ENCODE measurements at regions of chr2 and their contacts with region 1.

Region 1: GRCh38 chr2:160994141-160995002 is 165.9 kb upstream of the TANK start:
- DNase-seq: no peak
- H3K4me3 ChIP-seq: no peak overlapping the region
- CTCF ChIP-seq: peak; percentile 58

Region 2: GRCh38 chr2:160102021-160102760 is 892.2 kb before region 1 on chr2:
- CTCF ChIA-PET with region 1: interaction called, 68 read pairs
- POLR2A ChIA-PET with region 1: no interaction called
- DNase-seq: no peak
- H3K4me3 ChIP-seq: no peak overlapping the region
- CTCF ChIP-seq: no peak

Region 3: GRCh38 chr2:160210599-160211138 is 783.7 kb before region 1 on chr2:
- CTCF ChIA-PET with region 1: interaction called, 10 read pairs
- POLR2A ChIA-PET with region 1: no interaction called
- DNase-seq: no peak
- H3K4me3 ChIP-seq: no peak overlapping the region
- CTCF ChIP-seq: peak; percentile 79

Region 4: DNA sequence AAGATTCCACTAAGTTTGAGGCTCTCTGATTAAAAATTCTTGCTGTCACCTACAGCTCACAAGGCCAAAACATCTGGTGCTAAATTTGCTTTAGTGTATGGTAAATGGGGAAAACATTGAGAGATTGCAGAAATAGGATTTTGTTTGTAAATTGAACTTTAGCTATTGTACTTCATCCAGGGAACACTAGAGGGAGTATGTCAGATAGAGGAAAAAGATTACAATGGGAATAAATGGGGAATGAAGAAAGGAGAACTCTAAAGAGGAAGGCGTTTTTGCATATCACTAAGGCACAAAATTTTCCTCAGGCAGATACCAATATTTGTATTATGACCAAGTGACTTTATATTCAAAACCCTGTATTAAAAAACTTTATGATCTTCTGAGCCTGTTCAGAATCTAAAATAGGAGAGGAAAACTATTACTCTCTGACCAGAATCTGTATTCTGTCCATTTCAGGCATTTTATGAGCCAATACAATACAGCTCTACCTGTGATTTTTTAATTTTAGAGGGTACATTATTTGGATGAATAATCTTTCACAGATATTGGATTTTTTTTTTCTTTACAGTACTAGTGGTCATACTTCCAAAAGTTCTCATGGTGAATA is 742.0 kb before region 1 on chr2:
- CTCF ChIA-PET with region 1: interaction called, 37 read pairs
- POLR2A ChIA-PET with region 1: no interaction called
- DNase-seq: no peak
- H3K4me3 ChIP-seq: no peak overlapping the region
- CTCF ChIP-seq: peak; percentile 58

Region 5: GRCh38 chr2:160324161-160324800 is 670.1 kb before region 1 on chr2:
- CTCF ChIA-PET with region 1: interaction called, 31 read pairs
- POLR2A ChIA-PET with region 1: no interaction called
- DNase-seq: no peak
- H3K4me3 ChIP-seq: no peak overlapping the region
- CTCF ChIP-seq: peak; percentile 62

Region 6: GRCh38 chr2:161004379-161004778 is 10.0 kb after region 1 on chr2:
- CTCF ChIA-PET with region 1: interaction called, 65 read pairs
- POLR2A ChIA-PET with region 1: no interaction called
- DNase-seq: no peak
- H3K4me3 ChIP-seq: no peak overlapping the region
- CTCF ChIP-seq: peak; percentile 31

Measured in AG04449 (cell line).